Vagina (tissue), 2 donors: ENCODE measurements at regions of chr11 and their contacts with region 1.

Region 1: DNA sequence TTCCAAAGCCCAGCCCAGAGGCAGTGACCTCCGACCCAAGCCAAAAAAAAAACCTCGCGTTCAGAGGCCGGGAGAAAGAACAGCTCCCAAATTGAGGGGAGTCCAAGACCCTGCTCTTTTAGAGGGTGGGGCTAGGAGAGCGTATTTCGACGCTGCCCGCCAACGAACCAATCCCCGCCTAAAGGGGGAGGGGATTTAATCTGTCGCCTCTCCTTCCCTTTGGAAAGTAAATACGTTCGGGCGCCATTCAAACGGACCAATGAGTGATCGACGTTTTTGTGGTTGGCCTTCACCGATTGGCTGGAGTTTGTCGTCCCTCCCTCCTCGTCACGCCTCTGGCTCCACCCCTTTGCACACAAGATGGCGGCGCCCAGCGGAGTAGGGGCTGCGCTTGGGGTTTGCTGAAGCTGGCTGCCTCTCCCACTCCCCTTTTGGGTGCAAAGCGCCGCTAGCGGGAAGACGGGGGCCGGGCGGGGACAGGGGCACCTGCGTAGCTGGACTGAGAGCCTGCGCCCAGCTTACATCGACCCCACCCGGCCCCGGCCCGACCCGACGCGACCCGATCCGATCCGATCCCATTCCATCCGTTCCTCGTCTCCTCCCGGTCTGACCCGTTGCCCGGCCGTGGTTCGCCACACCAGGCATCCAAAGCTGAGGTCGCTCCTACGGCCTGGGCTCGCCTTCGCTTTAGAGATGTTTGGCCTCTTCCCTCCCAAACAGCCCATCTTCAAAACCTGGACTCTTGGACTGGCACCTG is at the start of gene RNF26:
- DNase-seq: peak in 1 of 2 donors; percentile 99
- H3K4me3 ChIP-seq: peak within 1 kb of the TSS; percentile 92 to 98
- H3K27ac ChIP-seq: peak within 1 kb of the TSS; percentile 87
- H3K4me1 ChIP-seq: peaks cover 35% of the 10 kb centered on the region
- H3K27me3 ChIP-seq: no peaks in the 10 kb centered on the region
- CTCF ChIP-seq: peak in 1 of 3 experiments; percentile 25
- POLR2A ChIP-seq: peak in 1 of 2 donors; percentile 60
- total RNA-seq, gene RNF26: 19.6 TPM

Region 2: GRCh38 chr11:119101759-119102423 is 232.5 kb before region 1 on chr11 and contains the start of gene DPAGT1:
- intact Hi-C with region 1: loop called (anchors 10 kb)
- DNase-seq: peak in 1 of 2 donors; percentile 98
- H3K4me3 ChIP-seq: peak within 1 kb of the TSS; percentile 71 to 96
- H3K27ac ChIP-seq: peak within 1 kb of the TSS; percentile 86
- H3K4me1 ChIP-seq: peaks cover 43% of the 10 kb centered on the region
- H3K27me3 ChIP-seq: no peaks in the 10 kb centered on the region
- CTCF ChIP-seq: peak in 2 of 3 experiments; percentile 13 to 33
- POLR2A ChIP-seq: peak in 1 of 2 donors; percentile 9
- total RNA-seq, gene DPAGT1: 18.2 TPM